ENCODE measurements at regions of chr19 and their contacts with region 1.

Region 1: DNA sequence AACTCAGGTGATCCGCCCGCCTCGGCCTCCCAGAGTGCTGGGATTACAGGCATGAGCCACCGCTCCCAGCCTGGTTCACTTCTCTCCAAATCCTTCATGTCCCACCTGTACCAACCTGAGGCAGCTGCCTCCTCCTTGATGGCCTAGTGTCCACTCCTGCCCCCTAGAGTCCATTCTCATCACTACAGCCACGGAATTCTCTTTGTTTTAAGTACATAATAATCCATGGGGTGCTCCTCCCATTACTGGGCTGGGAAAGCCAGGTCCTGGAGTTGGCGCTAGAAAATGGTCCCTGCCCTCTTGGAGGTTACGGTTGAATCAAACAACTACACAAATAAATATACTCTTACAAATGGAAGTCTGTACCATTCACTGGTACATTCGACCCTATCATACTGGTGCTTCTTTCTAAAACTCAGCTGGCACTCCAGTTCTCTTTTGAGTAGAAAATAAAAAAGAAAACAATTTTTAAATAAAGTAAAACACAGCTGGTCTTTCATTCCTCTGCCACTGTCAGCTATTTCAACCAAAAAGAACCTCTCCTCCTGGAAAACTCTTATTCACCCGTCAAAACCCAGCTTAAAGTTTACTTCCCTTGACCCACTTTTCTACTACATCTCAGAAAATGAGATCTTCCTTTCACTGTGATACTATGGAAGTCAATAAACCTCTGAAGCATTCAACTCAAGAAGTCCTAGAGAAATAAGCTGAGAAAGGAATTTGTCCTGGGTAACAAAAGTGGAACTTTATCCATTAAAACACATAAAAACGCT is 22.4 kb upstream of the ARHGEF18 start:
- DNase-seq: peak; percentile 51
- ATAC-seq: no peak
- H3K4me3 ChIP-seq: no peak overlapping the region
- H3K4me3 Mint-ChIP-seq: no peak overlapping the region
- H3K27ac ChIP-seq: no peak overlapping the region
- H3K27ac Mint-ChIP-seq: no peak overlapping the region
- H3K4me1 ChIP-seq: peaks cover 8% of the 10 kb centered on the region in 2 donors
- H3K4me1 Mint-ChIP-seq: peaks cover 5% of the 10 kb centered on the region
- H3K27me3 ChIP-seq: no peaks in the 10 kb centered on the region
- H3K27me3 Mint-ChIP-seq: no peaks in the 10 kb centered on the region
- CTCF ChIP-seq: peak; percentile 22

Region 2: DNA sequence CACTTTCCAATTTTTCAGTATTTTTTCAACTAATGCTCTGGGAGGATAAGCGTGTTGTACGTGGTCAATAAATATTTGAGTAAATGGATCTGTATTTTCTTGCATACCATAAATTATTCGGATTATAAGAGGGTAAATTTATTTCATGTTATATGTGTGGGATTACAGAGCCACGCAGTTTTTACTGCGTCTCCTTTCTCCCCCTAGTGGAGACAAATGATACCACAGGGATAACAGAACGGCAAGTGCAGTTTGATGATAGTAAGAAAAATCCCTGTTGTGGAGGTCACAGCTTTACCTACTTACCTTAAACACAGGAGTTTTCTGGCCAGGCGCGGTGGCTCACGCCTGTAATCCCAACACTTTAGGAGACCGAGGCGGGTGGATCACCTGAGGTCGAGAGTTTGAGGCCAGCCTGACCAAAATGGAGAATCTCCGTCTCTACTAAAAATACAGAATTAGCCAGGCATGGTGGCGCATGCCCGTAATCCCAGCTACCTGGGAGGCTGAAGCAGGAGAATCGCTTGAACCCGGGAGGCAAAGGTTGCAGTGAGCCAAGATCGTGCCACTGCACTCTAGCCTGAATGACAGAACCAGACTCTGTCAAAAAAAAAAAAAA is 321.9 kb before region 1 on chr19:
- CTCF ChIA-PET with region 1: no interaction called
- POLR2A ChIA-PET with region 1: no interaction called
- intact Hi-C with region 1: no loop called
- DNase-seq: peak; percentile 49
- ATAC-seq: no peak
- H3K4me3 ChIP-seq: no peak overlapping the region
- H3K4me3 Mint-ChIP-seq: no peak overlapping the region
- H3K27ac ChIP-seq: no peak overlapping the region
- H3K27ac Mint-ChIP-seq: no peak overlapping the region
- H3K4me1 ChIP-seq: no peaks in the 10 kb centered on the region
- H3K4me1 Mint-ChIP-seq: no peaks in the 10 kb centered on the region
- H3K27me3 ChIP-seq: no peaks in the 10 kb centered on the region
- H3K27me3 Mint-ChIP-seq: peaks cover 4% of the 10 kb centered on the region
- CTCF ChIP-seq: no peak

Region 3: DNA sequence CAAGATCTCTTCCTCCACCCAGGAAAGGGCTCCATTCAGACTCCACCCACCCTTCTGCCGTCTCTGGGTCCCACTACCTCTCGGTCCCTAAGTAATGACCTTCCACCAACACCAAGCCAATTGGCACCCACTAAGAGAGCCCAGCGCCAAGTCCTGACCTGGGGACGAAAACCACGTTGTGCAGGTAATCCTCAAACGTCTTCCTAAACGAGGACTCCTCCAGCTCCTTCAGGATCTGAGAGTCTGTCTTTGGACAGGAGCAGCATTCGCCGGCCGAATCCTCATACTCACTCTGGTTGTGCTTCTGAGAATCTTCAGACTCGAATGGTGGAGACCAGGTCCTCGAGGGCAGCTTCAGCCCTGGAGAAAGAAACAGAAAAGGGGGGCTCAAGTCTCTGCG is 173.7 kb before region 1 on chr19:
- CTCF ChIA-PET with region 1: interaction called, 20 read pairs
- POLR2A ChIA-PET with region 1: interaction called, 4 read pairs
- intact Hi-C with region 1: loop called (anchors 1 kb)
- DNase-seq: no peak
- ATAC-seq: no peak
- H3K4me3 ChIP-seq: no peak overlapping the region
- H3K4me3 Mint-ChIP-seq: no peak overlapping the region
- H3K27ac ChIP-seq: no peak overlapping the region
- H3K27ac Mint-ChIP-seq: peak overlapping the region; percentile 50
- H3K4me1 ChIP-seq: peaks cover 0 to 6% of the 10 kb centered on the region in 2 donors
- H3K4me1 Mint-ChIP-seq: peaks cover 2% of the 10 kb centered on the region
- H3K27me3 ChIP-seq: no peaks in the 10 kb centered on the region
- H3K27me3 Mint-ChIP-seq: no peaks in the 10 kb centered on the region
- CTCF ChIP-seq: no peak

Region 4: GRCh38 chr19:7211204-7211951 is 114.9 kb before region 1 on chr19:
- CTCF ChIA-PET with region 1: no interaction called
- POLR2A ChIA-PET with region 1: no interaction called
- intact Hi-C with region 1: no loop called
- DNase-seq: no peak
- ATAC-seq: no peak
- H3K4me3 ChIP-seq: no peak overlapping the region
- H3K4me3 Mint-ChIP-seq: no peak overlapping the region
- H3K27ac ChIP-seq: no peak overlapping the region
- H3K27ac Mint-ChIP-seq: no peak overlapping the region
- H3K4me1 ChIP-seq: peaks cover 11 to 22% of the 10 kb centered on the region in 2 donors
- H3K4me1 Mint-ChIP-seq: peaks cover 25% of the 10 kb centered on the region
- H3K27me3 ChIP-seq: peaks cover 0 to 2% (median 0%) of the 10 kb centered on the region in 4 experiments
- H3K27me3 Mint-ChIP-seq: peaks cover 3% of the 10 kb centered on the region
- CTCF ChIP-seq: no peak

Region 5: DNA sequence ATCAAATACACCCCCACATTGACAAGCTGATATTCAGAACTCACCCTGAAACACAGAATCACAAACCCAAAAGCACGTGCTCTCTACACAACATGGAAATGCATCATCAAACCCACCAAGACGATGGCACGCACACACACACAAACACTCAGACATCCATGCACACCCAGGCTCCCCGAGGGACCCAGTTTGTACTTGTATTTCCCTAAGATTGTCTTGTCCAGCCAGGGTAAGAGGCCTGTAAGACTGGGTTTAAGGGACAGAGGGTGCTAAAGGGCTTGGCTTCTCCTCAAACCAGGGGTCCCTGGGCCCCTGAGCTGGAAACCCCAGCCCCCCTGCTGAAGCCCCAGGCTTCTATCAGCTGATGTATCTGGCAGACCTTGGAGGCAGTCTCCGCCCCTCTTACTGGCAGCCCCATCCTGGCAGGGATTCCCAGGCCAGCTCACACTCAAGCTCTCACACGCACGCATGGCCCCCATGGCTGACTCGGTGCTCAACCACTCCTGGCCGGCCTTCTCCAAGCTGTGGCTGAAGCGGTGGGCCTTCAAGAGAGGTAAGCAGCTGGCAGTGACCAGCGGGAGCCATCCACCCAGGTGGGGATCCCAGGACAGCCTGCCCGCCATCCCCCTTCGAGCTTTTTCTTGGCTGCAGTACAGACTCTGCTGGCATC is 29.0 kb after region 1 on chr19:
- CTCF ChIA-PET with region 1: interaction called, 52 read pairs
- POLR2A ChIA-PET with region 1: no interaction called
- intact Hi-C with region 1: no loop called
- DNase-seq: no peak
- ATAC-seq: no peak
- H3K4me3 ChIP-seq: no peak overlapping the region
- H3K4me3 Mint-ChIP-seq: no peak overlapping the region
- H3K27ac ChIP-seq: peak overlapping the region in 1 of 2 donors; percentile 15
- H3K27ac Mint-ChIP-seq: peak overlapping the region; percentile 89
- H3K4me1 ChIP-seq: peaks cover 64 to 85% of the 10 kb centered on the region in 2 donors
- H3K4me1 Mint-ChIP-seq: peaks cover 75% of the 10 kb centered on the region
- H3K27me3 ChIP-seq: no peaks in the 10 kb centered on the region
- H3K27me3 Mint-ChIP-seq: no peaks in the 10 kb centered on the region
- CTCF ChIP-seq: no peak

Region 6: GRCh38 chr19:7376151-7376852 is 50.0 kb after region 1 on chr19:
- CTCF ChIA-PET with region 1: interaction called, 53 read pairs
- POLR2A ChIA-PET with region 1: no interaction called
- intact Hi-C with region 1: loop called (anchors 1 kb)
- DNase-seq: no peak
- ATAC-seq: no peak
- H3K4me3 ChIP-seq: no peak overlapping the region
- H3K4me3 Mint-ChIP-seq: no peak overlapping the region
- H3K27ac ChIP-seq: no peak overlapping the region
- H3K27ac Mint-ChIP-seq: peak overlapping the region; percentile 26
- H3K4me1 ChIP-seq: peaks cover 0 to 5% of the 10 kb centered on the region in 2 donors
- H3K4me1 Mint-ChIP-seq: peaks cover 10% of the 10 kb centered on the region
- H3K27me3 ChIP-seq: no peaks in the 10 kb centered on the region
- H3K27me3 Mint-ChIP-seq: no peaks in the 10 kb centered on the region
- CTCF ChIP-seq: no peak

Region 7: DNA sequence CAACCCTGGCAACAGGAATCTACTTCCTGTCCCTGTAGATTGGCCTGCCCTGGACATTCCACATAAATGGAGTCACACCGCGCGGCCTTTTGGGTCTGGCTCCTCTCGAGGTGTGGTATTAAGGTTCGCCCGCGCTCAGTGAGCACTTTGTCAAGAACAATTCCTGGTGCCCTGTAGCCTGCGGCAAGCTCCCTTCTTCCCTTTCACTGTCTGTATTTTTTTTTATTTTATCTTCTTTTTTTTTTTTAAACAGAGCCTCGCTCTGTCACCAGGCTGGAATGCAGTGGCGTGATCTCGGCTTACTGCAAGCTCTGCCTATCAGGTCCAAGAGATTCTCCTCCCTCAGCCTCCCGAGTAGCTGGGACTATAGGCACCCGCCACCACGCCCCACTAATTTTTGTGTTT is 134.3 kb after region 1 on chr19:
- CTCF ChIA-PET with region 1: no interaction called
- POLR2A ChIA-PET with region 1: no interaction called
- intact Hi-C with region 1: no loop called
- DNase-seq: no peak
- ATAC-seq: no peak
- H3K4me3 ChIP-seq: no peak overlapping the region
- H3K4me3 Mint-ChIP-seq: no peak overlapping the region
- H3K27ac ChIP-seq: no peak overlapping the region
- H3K27ac Mint-ChIP-seq: no peak overlapping the region
- H3K4me1 ChIP-seq: no peaks in the 10 kb centered on the region
- H3K4me1 Mint-ChIP-seq: peaks cover under 1% of the 10 kb centered on the region
- H3K27me3 ChIP-seq: no peaks in the 10 kb centered on the region
- H3K27me3 Mint-ChIP-seq: no peaks in the 10 kb centered on the region
- CTCF ChIP-seq: no peak